MCF 10A (cell line): ENCODE measurements at regions of chr2 and their contacts with region 1.

Region 1: GRCh38 chr2:230684270-230685168 is 28.1 kb upstream of the CAB39 start:
- DNase-seq: peak; percentile 91
- H3K4me3 Mint-ChIP-seq: no peak overlapping the region
- H3K27ac Mint-ChIP-seq: peak overlapping the region; percentile 87
- H3K4me1 Mint-ChIP-seq: peaks cover 44% of the 10 kb centered on the region
- H3K27me3 Mint-ChIP-seq: no peaks in the 10 kb centered on the region
- CTCF ChIP-seq: no peak

Region 2: DNA sequence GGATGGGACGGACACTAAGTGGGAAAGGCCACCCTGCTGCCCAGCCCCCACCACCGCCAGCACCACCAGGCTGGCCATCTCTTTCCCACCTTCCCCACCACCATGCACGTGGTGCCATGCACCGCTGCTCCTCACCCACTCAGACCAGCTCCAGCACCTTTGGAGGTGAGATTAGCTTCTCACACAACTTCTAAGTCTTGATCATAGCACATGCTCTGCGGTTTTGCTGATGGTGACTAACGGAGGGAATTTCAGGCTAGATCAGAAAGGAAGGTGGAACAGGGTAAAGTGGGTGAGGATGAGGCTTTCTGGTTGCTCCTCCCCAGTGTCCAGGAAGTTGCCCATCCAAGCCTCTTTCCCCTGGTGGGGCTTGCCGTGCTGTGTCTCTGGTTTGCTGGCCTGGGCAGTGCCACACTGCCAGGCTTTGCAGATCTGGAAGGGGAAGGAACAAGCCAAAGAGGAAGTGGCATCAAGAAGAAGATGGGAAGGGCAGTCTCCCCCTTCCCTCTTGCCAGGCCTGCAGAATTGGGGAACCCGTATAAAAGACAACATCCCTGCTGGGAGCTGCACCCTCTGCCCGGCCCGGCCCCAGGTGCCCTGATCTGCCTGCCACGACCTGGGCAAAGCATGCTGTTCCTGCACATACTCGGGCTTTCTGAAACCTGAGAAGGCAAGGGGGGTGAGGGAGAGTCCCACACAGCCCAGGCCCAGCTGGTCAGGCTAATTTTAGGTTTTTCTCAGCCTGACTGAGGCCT is 16.2 kb before region 1 on chr2:
- CTCF ChIA-PET with region 1: interaction called, 5 read pairs
- POLR2A ChIA-PET with region 1: interaction called, 11 read pairs
- intact Hi-C with region 1: no loop called
- DNase-seq: peak; percentile 90
- H3K4me3 Mint-ChIP-seq: peak overlapping the region; percentile 16
- H3K27ac Mint-ChIP-seq: peak overlapping the region; percentile 70
- H3K4me1 Mint-ChIP-seq: peaks cover 50% of the 10 kb centered on the region
- H3K27me3 Mint-ChIP-seq: no peaks in the 10 kb centered on the region
- CTCF ChIP-seq: no peak